Kidney (tissue), 22 donors: ENCODE measurements at regions of chr16 and their contacts with region 1.

Region 1: GRCh38 chr16:66608241-66609138 is 4.0 kb downstream of the CMTM3 start:
- DNase-seq: peak; percentile 92 to 95 (median 92)
- H3K4me3 ChIP-seq: no peak overlapping the region
- H3K27ac ChIP-seq: no peak overlapping the region
- H3K4me1 ChIP-seq: peaks cover 0 to 14% (median 8%) of the 10 kb centered on the region in 3 donors
- H3K27me3 ChIP-seq: no peaks in the 10 kb centered on the region
- CTCF ChIP-seq: peak; percentile 75

Region 2: DNA sequence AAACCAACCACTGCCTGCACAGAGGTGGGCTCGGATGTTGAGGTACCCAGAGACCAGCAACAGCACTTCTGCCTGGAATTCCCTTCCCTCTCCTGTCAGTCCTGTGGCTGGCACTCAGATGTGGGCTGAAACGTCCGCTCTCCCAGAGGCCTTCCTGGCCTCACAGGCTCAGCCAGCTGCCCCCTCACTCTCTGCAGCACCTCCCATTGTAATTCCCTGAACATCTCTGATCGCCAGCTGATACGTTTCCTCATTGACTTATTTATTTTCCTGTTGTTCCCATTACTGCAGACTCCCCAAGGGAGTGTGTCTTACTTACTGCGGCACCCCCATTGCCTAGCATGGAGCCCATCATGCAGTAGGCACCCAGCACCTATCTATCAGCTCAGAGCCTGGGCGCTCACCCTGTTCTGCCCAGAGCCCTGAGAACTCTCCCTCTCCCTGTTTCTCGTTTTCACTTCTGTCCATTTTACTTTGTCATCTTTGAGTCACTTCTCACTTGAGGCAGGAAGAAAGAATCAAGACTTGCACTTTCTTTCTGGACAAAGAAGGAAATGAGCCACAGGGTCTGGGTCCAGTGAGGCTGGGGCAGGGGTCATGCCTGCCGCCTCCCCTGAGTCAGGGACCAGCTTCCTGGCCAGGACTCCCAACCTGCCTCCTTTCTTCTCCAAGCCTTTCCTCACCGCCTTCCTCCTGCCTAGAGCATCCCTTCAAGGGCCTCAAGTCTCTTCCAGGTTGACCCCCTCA is 231.8 kb before region 1 on chr16:
- intact Hi-C with region 1: no loop called
- DNase-seq: no peak
- H3K4me3 ChIP-seq: no peak overlapping the region
- H3K27ac ChIP-seq: no peak overlapping the region
- H3K4me1 ChIP-seq: no peaks in the 10 kb centered on the region
- H3K27me3 ChIP-seq: no peaks in the 10 kb centered on the region
- CTCF ChIP-seq: no peak

Region 3: GRCh38 chr16:66406534-66407221 is 201.8 kb before region 1 on chr16:
- intact Hi-C with region 1: loop called (anchors 10 kb)
- DNase-seq: peak; percentile 85 to 89 (median 86)
- H3K4me3 ChIP-seq: peak overlapping the region; percentile 38 to 70 (median 69)
- H3K27ac ChIP-seq: peak overlapping the region; percentile 8 to 20
- H3K4me1 ChIP-seq: peaks cover 0 to 8% (median 0%) of the 10 kb centered on the region in 3 donors
- H3K27me3 ChIP-seq: no peaks in the 10 kb centered on the region
- CTCF ChIP-seq: peak; percentile 89

Region 4: GRCh38 chr16:66832661-66833305 is 224.3 kb after region 1 on chr16:
- intact Hi-C with region 1: no loop called
- DNase-seq: peak in 2 of 5 donors; percentile 13 to 24
- H3K4me3 ChIP-seq: no peak overlapping the region
- H3K27ac ChIP-seq: no peak overlapping the region
- H3K4me1 ChIP-seq: peaks cover 0 to 8% (median 0%) of the 10 kb centered on the region in 3 donors
- H3K27me3 ChIP-seq: no peaks in the 10 kb centered on the region
- CTCF ChIP-seq: no peak